B cell (primary cell): ENCODE measurements at regions of chr22 and their contacts with region 1.

Region 1: DNA sequence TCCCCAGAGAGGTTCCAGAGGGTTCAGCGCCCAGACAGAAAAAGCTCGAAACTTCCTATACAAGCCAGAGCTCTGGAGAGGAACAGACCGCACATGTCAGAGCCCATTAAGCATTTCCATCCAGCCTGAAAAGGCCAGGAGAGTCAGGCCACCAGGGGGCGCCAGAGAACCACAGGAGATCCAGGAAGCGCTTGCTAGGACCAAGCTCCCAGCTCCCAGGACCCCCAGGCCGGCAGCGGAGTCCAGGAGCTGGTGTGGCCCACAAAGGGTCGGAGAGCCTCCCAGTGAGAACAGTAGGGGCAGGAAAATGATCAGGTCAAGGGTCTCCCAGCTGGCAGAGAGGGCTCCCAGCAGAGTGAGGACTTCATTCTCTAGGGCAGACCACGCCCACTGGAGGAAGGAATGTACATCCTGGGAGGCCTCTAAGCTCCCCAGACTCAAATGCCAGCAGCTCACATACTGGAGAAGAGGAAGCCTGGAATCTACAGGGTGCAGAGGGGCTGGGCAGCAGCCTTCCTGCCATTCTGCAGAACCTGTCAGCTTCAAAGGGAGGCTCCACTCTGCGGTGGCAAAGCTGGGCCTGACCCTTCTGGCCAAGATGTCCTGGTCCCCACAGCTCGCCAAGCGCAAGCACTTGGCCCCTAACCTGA is 2.1 kb upstream of the MEI1 start:
- DNase-seq: peak; percentile 91
- ATAC-seq: peak; percentile 87
- H3K4me3 ChIP-seq: peak overlapping the region in 1 of 5 experiments; percentile 10
- H3K4me3 Mint-ChIP-seq: peak overlapping the region; percentile 78
- H3K27ac ChIP-seq: peak overlapping the region in 1 of 2 donors; percentile 18
- H3K27ac Mint-ChIP-seq: peak overlapping the region; percentile 88
- H3K4me1 ChIP-seq: peaks cover 8 to 18% of the 10 kb centered on the region in 2 donors
- H3K4me1 Mint-ChIP-seq: peaks cover 9% of the 10 kb centered on the region
- H3K27me3 ChIP-seq: no peaks in the 10 kb centered on the region
- H3K27me3 Mint-ChIP-seq: no peaks in the 10 kb centered on the region
- CTCF ChIP-seq: peak; percentile 96

Region 2: DNA sequence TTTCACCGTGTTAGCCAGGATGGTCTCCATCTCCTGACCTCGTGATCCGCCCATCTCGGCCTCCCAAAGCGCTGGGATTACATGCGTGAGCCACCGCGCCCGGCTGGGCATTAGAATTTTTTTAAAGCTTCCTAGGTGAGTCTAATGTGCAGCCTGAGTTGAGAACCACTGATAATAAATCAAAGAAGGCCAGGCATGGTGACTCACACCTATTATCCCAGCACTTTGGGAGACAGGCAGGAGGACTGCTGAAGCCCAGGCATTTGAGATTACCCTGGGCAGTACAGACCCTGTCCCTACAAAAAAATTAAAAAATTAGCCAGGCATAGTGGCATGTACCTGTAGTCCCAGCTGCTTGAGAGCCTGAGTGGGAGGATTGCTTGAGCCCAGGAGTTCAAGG is 15.8 kb after region 1 on chr22:
- CTCF ChIA-PET with region 1: interaction called, 23 read pairs
- POLR2A ChIA-PET with region 1: no interaction called
- intact Hi-C with region 1: no loop called
- DNase-seq: no peak
- ATAC-seq: no peak
- H3K4me3 ChIP-seq: no peak overlapping the region
- H3K4me3 Mint-ChIP-seq: no peak overlapping the region
- H3K27ac ChIP-seq: no peak overlapping the region
- H3K27ac Mint-ChIP-seq: no peak overlapping the region
- H3K4me1 ChIP-seq: no peaks in the 10 kb centered on the region
- H3K4me1 Mint-ChIP-seq: no peaks in the 10 kb centered on the region
- H3K27me3 ChIP-seq: no peaks in the 10 kb centered on the region
- H3K27me3 Mint-ChIP-seq: no peaks in the 10 kb centered on the region
- CTCF ChIP-seq: no peak

Region 3: DNA sequence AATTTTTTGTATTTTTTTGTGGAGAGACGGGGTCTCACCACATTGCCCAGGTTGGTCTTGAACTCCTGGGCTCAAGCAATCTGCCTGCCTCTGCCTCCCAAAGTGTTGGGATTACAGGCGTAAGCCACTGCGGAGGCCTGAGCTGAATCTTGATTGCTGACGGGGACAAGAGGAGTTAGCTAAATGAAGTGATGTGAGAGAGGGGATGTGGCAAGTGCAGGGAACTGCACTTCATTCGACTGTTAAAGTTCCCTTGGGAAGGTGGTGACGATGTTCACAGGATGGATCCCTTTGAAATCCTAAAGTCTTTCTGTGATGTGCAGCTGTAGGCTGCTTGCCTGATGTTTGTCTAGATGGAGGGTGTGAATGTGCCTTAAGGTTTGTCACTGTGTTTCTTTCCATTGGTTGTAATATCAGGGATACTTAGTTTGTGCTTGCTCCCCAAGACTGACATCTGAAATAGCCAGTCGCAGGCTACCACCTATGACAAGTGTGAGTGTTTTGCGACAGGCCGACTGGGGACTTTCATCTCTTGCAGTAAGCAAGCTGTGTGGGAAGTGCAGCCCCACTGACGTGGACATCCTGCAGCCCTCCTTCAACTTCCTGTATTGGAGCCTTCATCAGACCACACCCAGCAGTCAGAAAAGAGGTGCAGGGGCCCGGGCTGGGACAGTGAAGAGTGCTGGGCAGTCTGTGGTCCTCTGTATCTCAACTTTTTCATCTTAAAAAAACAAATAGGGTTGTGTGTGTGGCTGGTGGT is 83.7 kb after region 1 on chr22:
- CTCF ChIA-PET with region 1: interaction called, 45 read pairs
- POLR2A ChIA-PET with region 1: interaction called, 4 read pairs
- intact Hi-C with region 1: loop called (anchors 1 kb)
- DNase-seq: peak; percentile 94
- ATAC-seq: peak; percentile 96
- H3K4me3 ChIP-seq: peak overlapping the region; percentile 47 to 76 (median 60)
- H3K4me3 Mint-ChIP-seq: peak overlapping the region; percentile 88
- H3K27ac ChIP-seq: peak overlapping the region; percentile 90 to 95
- H3K27ac Mint-ChIP-seq: peak overlapping the region; percentile 98
- H3K4me1 ChIP-seq: peaks cover 26 to 31% of the 10 kb centered on the region in 2 donors
- H3K4me1 Mint-ChIP-seq: peaks cover 37% of the 10 kb centered on the region
- H3K27me3 ChIP-seq: no peaks in the 10 kb centered on the region
- H3K27me3 Mint-ChIP-seq: no peaks in the 10 kb centered on the region
- CTCF ChIP-seq: no peak

Region 4: GRCh38 chr22:41832553-41833368 is 135.5 kb after region 1 on chr22 and contains the start of gene SREBF2:
- CTCF ChIA-PET with region 1: interaction called, 27 read pairs
- POLR2A ChIA-PET with region 1: interaction called, 4 read pairs
- intact Hi-C with region 1: no loop called
- DNase-seq: peak; percentile 99
- ATAC-seq: peak; percentile 86
- H3K4me3 ChIP-seq: peak within 1 kb of the TSS; percentile 49 to 92 (median 90)
- H3K4me3 Mint-ChIP-seq: peak within 1 kb of the TSS; percentile 96
- H3K27ac ChIP-seq: peak within 1 kb of the TSS; percentile 99 to 100
- H3K27ac Mint-ChIP-seq: peak within 1 kb of the TSS; percentile 99
- H3K4me1 ChIP-seq: peaks cover 20 to 36% of the 10 kb centered on the region in 2 donors
- H3K4me1 Mint-ChIP-seq: peaks cover 55% of the 10 kb centered on the region
- H3K27me3 ChIP-seq: no peaks in the 10 kb centered on the region
- H3K27me3 Mint-ChIP-seq: no peaks in the 10 kb centered on the region
- CTCF ChIP-seq: no peak
- total RNA-seq, gene SREBF2: 287 and 304 TPM in 2 replicates

Region 5: GRCh38 chr22:41946629-41947423 is 249.6 kb after region 1 on chr22 and contains the start of gene CENPM:
- CTCF ChIA-PET with region 1: interaction called, 83 read pairs
- POLR2A ChIA-PET with region 1: interaction called, 8 read pairs
- intact Hi-C with region 1: no loop called
- DNase-seq: peak; percentile 93
- ATAC-seq: peak; percentile 91
- H3K4me3 ChIP-seq: peak within 1 kb of the TSS; percentile 38 to 86 (median 68)
- H3K4me3 Mint-ChIP-seq: peak within 1 kb of the TSS; percentile 97
- H3K27ac ChIP-seq: peak within 1 kb of the TSS in 1 of 2 donors; percentile 11
- H3K27ac Mint-ChIP-seq: peak within 1 kb of the TSS; percentile 73
- H3K4me1 ChIP-seq: peaks cover 20 to 44% of the 10 kb centered on the region in 2 donors
- H3K4me1 Mint-ChIP-seq: peaks cover 39% of the 10 kb centered on the region
- H3K27me3 ChIP-seq: peaks cover 0 to 10% (median 0%) of the 10 kb centered on the region in 4 experiments
- H3K27me3 Mint-ChIP-seq: no peaks in the 10 kb centered on the region
- CTCF ChIP-seq: no peak
- total RNA-seq, gene CENPM: 26.0 and 30.7 TPM in 2 replicates

Region 6: GRCh38 chr22:42437488-42438292 is 740.4 kb after region 1 on chr22:
- CTCF ChIA-PET with region 1: no interaction called
- POLR2A ChIA-PET with region 1: no interaction called
- intact Hi-C with region 1: loop called (anchors 10 kb)
- DNase-seq: peak; percentile 90
- ATAC-seq: peak; percentile 88
- H3K4me3 ChIP-seq: peak overlapping the region; percentile 9 to 73 (median 49)
- H3K4me3 Mint-ChIP-seq: peak overlapping the region; percentile 86
- H3K27ac ChIP-seq: peak overlapping the region in 1 of 2 donors; percentile 69
- H3K27ac Mint-ChIP-seq: peak overlapping the region; percentile 79
- H3K4me1 ChIP-seq: peaks cover 36 to 46% of the 10 kb centered on the region in 2 donors
- H3K4me1 Mint-ChIP-seq: peaks cover 40% of the 10 kb centered on the region
- H3K27me3 ChIP-seq: peaks cover 0 to 58% (median 18%) of the 10 kb centered on the region in 4 experiments
- H3K27me3 Mint-ChIP-seq: peaks cover 41% of the 10 kb centered on the region
- CTCF ChIP-seq: peak; percentile 98